Activated T-helper 1 cell treated with anti-CD3 and anti-CD28 coated beads, Interleukin-12 subunit alpha, Interleukin-12 subunit beta, Interleukin-2, Interleukin-4 antibody, amounts not matched to agents 30 ng/mL and 10 ng/mL and 1 ng/mL, durations not matched to agents 14 hours and 24 hours and 36 hours (primary cell): ENCODE measurements at regions of chr1 and their contacts with region 1.

Region 1: GRCh38 chr1:203006948-203007871 is at the start of gene TMEM183A:
- DNase-seq: peak; percentile 95
- H3K4me3 Mint-ChIP-seq: peak within 1 kb of the TSS; percentile 89
- H3K27ac Mint-ChIP-seq: peak within 1 kb of the TSS; percentile 96
- H3K4me1 Mint-ChIP-seq: peaks cover 34% of the 10 kb centered on the region
- H3K27me3 Mint-ChIP-seq: no peaks in the 10 kb centered on the region
- total RNA-seq, gene TMEM183A: 69.9 and 83.6 TPM in 2 replicates

Region 2: GRCh38 chr1:202968840-202969295 is 38.3 kb before region 1 on chr1:
- intact Hi-C with region 1: loop called (anchors 1 kb)
- DNase-seq: peak; percentile 20
- H3K4me3 Mint-ChIP-seq: peak overlapping the region; percentile 48
- H3K27ac Mint-ChIP-seq: no peak overlapping the region
- H3K4me1 Mint-ChIP-seq: peaks cover 35% of the 10 kb centered on the region
- H3K27me3 Mint-ChIP-seq: peaks cover 11% of the 10 kb centered on the region

Region 3: GRCh38 chr1:203153989-203154821 is 147.0 kb after region 1 on chr1:
- intact Hi-C with region 1: no loop called
- DNase-seq: no peak
- H3K4me3 Mint-ChIP-seq: no peak overlapping the region
- H3K27ac Mint-ChIP-seq: no peak overlapping the region
- H3K4me1 Mint-ChIP-seq: no peaks in the 10 kb centered on the region
- H3K27me3 Mint-ChIP-seq: peaks cover 7% of the 10 kb centered on the region